ENCODE measurements at regions of chr11 and their contacts with region 1.

Region 1: GRCh38 chr11:207208-207862 is at the starts of genes BET1L and RIC8A:
- DNase-seq: peak; percentile 98
- H3K4me3 Mint-ChIP-seq: peak within 1 kb of the TSS; percentile 97
- H3K27ac Mint-ChIP-seq: peak within 1 kb of the TSS; percentile 99
- H3K4me1 Mint-ChIP-seq: peaks cover 55% of the 10 kb centered on the region
- H3K27me3 Mint-ChIP-seq: no peaks in the 10 kb centered on the region
- total RNA-seq, gene BET1L: 51.0 to 53.2 TPM
- total RNA-seq, gene RIC8A: 100 to 104 TPM

Region 2: DNA sequence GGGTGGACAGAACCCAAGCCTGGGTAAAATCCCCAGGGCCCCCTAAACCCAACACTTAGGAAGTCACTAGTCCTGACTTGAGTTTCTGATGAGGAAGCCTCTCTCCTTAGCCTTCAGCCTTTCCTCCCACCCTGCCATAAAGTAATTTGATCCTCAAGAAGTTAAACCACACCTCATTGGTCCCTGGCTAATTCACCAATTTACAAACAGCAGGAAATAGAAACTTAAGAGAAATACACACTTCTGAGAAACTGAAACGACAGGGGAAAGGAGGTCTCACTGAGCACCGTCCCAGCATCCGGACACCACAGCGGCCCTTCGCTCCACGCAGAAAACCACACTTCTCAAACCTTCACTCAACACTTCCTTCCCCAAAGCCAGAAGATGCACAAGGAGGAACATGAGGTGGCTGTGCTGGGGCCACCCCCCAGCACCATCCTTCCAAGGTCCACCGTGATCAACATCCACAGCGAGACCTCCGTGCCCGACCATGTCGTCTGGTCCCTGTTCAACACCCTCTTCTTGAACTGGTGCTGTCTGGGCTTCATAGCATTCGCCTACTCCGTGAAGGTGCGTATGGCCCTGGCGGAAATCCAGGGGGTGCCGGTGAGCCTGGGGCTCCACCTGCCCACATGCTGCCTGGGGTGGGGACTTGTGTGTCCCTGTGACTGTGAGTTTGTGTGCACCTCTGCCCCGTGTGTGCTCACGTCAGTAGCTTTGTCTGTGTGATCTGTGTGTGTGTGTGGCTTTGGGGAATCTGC is 106.6 kb after region 1 on chr11 and contains the start of gene IFITM1:
- CTCF ChIA-PET with region 1: interaction called, 3 read pairs
- POLR2A ChIA-PET with region 1: interaction called, 7 read pairs
- intact Hi-C with region 1: loop called (anchors 2 kb)
- DNase-seq: peak; percentile 80
- H3K4me3 Mint-ChIP-seq: peak within 1 kb of the TSS; percentile 97
- H3K27ac Mint-ChIP-seq: peak within 1 kb of the TSS; percentile 100
- H3K4me1 Mint-ChIP-seq: peaks cover 36% of the 10 kb centered on the region
- H3K27me3 Mint-ChIP-seq: no peaks in the 10 kb centered on the region
- total RNA-seq, gene IFITM1: 195 to 200 TPM

Region 3: GRCh38 chr11:355581-356458 is 148.5 kb after region 1 on chr11:
- CTCF ChIA-PET with region 1: interaction called, 4 read pairs
- POLR2A ChIA-PET with region 1: interaction called, 10 read pairs
- intact Hi-C with region 1: loop called (anchors 5 kb)
- DNase-seq: peak; percentile 92
- H3K4me3 Mint-ChIP-seq: no peak overlapping the region
- H3K27ac Mint-ChIP-seq: no peak overlapping the region
- H3K4me1 Mint-ChIP-seq: peaks cover 32% of the 10 kb centered on the region
- H3K27me3 Mint-ChIP-seq: no peaks in the 10 kb centered on the region

Region 4: GRCh38 chr11:447923-448731 is 240.8 kb after region 1 on chr11:
- CTCF ChIA-PET with region 1: no interaction called
- POLR2A ChIA-PET with region 1: interaction called, 3 read pairs
- intact Hi-C with region 1: loop called (anchors 2 kb)
- DNase-seq: peak; percentile 97
- H3K4me3 Mint-ChIP-seq: peak overlapping the region; percentile 90
- H3K27ac Mint-ChIP-seq: peak overlapping the region; percentile 95
- H3K4me1 Mint-ChIP-seq: peaks cover 21% of the 10 kb centered on the region
- H3K27me3 Mint-ChIP-seq: peaks cover 2% of the 10 kb centered on the region

Region 5: GRCh38 chr11:1559119-1559951 is 1352.0 kb after region 1 on chr11:
- CTCF ChIA-PET with region 1: no interaction called
- POLR2A ChIA-PET with region 1: no interaction called
- intact Hi-C with region 1: no loop called
- DNase-seq: peak; percentile 28
- H3K4me3 Mint-ChIP-seq: no peak overlapping the region
- H3K27ac Mint-ChIP-seq: no peak overlapping the region
- H3K4me1 Mint-ChIP-seq: no peaks in the 10 kb centered on the region
- H3K27me3 Mint-ChIP-seq: no peaks in the 10 kb centered on the region